PC-3 (cell line): ENCODE measurements at regions of chr7 and their contacts with region 1.

Region 1: GRCh38 chr7:12686894-12687717 is at the start of gene ARL4A:
- DNase-seq: peak; percentile 98
- ATAC-seq: peak; percentile 76
- H3K4me3 ChIP-seq: peak within 1 kb of the TSS; percentile 92
- H3K27ac ChIP-seq: peak within 1 kb of the TSS; percentile 71
- H3K4me1 ChIP-seq: peaks cover 32% of the 10 kb centered on the region
- H3K27me3 ChIP-seq: no peaks in the 10 kb centered on the region
- CTCF ChIP-seq: peak; percentile 61
- total RNA-seq, gene ARL4A: 23.7 and 25.1 TPM in 2 replicates

Region 2: DNA sequence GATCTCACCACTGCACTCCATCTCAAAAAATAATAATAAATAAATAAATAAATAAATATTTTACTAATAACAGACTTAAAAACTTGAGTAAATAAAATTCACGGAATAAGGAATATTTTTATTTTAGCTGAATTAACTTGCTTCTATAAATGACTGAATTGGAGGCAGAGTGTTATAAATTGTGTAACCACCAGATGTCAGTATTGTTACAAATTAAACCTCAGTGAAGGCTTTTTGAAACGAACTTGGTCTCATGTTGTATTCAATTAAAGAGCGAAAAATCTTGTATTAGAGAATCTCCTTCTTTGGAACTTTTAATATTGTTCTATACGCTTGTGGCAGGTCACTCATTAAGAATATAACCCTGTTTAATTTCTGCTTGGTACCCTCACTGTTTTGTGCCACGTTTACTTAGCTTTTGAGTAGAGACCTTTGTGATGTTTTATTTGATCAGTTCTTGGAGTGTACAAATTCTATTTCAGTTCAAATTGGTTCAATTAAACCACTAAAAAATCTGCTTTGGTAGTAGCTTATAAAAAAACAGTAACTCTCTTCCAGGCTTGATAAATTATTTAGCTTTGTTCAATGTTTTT is 162.2 kb before region 1 on chr7:
- CTCF ChIA-PET with region 1: no interaction called
- POLR2A ChIA-PET with region 1: no interaction called
- intact Hi-C with region 1: loop called (anchors 2 kb)
- DNase-seq: peak; percentile 80
- ATAC-seq: peak; percentile 51; the same call in 1 of the 2 replicates
- H3K4me3 ChIP-seq: no peak overlapping the region
- H3K27ac ChIP-seq: no peak overlapping the region
- H3K4me1 ChIP-seq: no peaks in the 10 kb centered on the region
- H3K27me3 ChIP-seq: no peaks in the 10 kb centered on the region
- CTCF ChIP-seq: peak; percentile 64

Region 3: DNA sequence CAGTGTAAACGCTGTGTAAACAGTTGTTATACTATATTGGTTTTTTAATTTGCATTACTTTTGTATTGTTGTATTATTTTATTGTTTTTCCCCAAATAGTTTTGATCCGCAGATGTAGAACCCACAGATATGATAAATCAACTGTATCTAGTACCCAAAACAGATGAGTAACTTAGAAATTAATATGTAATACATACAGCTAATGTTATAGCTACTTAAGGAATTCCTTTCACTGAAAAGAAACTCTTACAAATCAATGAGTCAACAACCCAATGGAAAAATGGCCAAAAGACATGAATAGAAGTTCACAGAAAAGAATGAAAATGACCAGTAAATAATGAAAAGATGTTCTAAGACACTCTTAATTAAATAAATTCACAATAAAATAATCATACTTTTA is 31.9 kb before region 1 on chr7:
- CTCF ChIA-PET with region 1: interaction called, 4 read pairs
- POLR2A ChIA-PET with region 1: interaction called, 16 read pairs
- intact Hi-C with region 1: no loop called
- DNase-seq: peak; percentile 55
- ATAC-seq: peak; percentile 38; the same call in 1 of the 2 replicates
- H3K4me3 ChIP-seq: no peak overlapping the region
- H3K27ac ChIP-seq: no peak overlapping the region
- H3K4me1 ChIP-seq: peaks cover 32% of the 10 kb centered on the region
- H3K27me3 ChIP-seq: no peaks in the 10 kb centered on the region
- CTCF ChIP-seq: no peak

Region 4: GRCh38 chr7:12737373-12737772 is 50.3 kb after region 1 on chr7:
- CTCF ChIA-PET with region 1: no interaction called
- POLR2A ChIA-PET with region 1: no interaction called
- intact Hi-C with region 1: no loop called
- DNase-seq: no peak
- ATAC-seq: no peak
- H3K4me3 ChIP-seq: no peak overlapping the region
- H3K27ac ChIP-seq: no peak overlapping the region
- H3K4me1 ChIP-seq: peaks cover 18% of the 10 kb centered on the region
- H3K27me3 ChIP-seq: no peaks in the 10 kb centered on the region
- CTCF ChIP-seq: no peak

Region 5: DNA sequence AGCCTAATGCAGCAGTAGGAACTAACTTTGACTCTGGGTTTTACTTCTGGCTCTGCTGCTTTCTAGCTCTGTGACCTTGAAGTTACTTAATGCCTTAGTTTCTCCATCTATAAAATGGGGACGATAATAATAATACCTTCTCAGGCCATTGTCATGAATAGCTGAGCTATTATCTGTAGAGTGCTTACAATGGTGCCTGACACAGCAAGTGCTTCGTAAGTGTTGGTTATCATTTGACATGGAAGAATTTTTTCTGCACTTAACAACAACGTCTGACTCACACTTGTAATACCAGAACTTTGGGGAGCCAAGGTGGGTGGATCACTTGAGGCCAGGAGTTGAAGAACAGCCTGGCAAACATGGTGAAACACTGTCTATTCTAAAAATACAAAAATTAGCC is 140.8 kb after region 1 on chr7:
- CTCF ChIA-PET with region 1: interaction called, 3 read pairs
- POLR2A ChIA-PET with region 1: no interaction called
- intact Hi-C with region 1: loop called (anchors 1 kb)
- DNase-seq: peak; percentile 36
- ATAC-seq: no peak
- H3K4me3 ChIP-seq: no peak overlapping the region
- H3K27ac ChIP-seq: peak overlapping the region; percentile 58
- H3K4me1 ChIP-seq: peaks cover 16% of the 10 kb centered on the region
- H3K27me3 ChIP-seq: no peaks in the 10 kb centered on the region
- CTCF ChIP-seq: no peak

Region 6: DNA sequence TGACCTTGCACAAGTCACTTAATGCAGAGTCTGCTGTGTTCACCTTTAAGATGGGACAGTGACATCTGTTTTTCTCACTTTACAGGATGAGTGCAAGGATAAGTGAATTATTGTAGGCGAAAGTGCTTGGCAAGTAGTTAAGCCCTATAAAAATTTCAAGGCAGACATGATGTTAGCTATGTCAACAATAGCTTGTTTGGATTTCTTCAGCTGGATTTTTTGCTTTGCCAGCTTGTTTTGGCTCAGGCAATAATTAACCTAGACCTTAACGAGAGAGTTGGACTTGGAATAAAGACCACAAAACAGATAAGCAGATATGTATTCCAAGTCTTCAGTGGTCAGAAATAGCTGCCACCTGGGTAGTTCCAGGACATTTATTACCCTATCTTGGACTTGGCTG is 255.5 kb after region 1 on chr7:
- CTCF ChIA-PET with region 1: no interaction called
- POLR2A ChIA-PET with region 1: interaction called, 3 read pairs
- intact Hi-C with region 1: loop called (anchors 1 kb)
- DNase-seq: peak; percentile 62
- ATAC-seq: peak; percentile 82
- H3K4me3 ChIP-seq: no peak overlapping the region
- H3K27ac ChIP-seq: no peak overlapping the region
- H3K4me1 ChIP-seq: peaks cover 33% of the 10 kb centered on the region
- H3K27me3 ChIP-seq: no peaks in the 10 kb centered on the region
- CTCF ChIP-seq: no peak

Region 7: DNA sequence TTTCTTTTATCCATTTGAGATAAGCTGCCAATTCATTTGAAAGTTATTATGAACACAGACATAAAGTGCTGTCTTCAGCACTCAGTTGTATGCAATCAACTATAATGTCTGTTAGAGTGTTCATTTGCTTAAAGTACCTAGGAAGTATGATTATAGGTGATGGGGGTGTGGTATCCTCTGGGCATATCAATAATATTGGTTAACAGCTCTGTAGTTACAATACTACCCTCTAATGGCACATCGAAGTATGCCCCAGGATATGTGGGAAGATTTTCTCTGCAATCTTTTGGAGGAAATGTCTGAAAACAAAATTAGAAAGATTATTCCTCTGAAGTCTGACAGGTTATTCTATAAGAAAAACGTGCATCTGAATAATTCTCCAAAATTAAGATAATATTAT is 430.0 kb after region 1 on chr7:
- CTCF ChIA-PET with region 1: interaction called, 9 read pairs
- POLR2A ChIA-PET with region 1: no interaction called
- intact Hi-C with region 1: loop called (anchors 1 kb)
- DNase-seq: peak; percentile 57
- ATAC-seq: peak; percentile 35; the same call in 1 of the 2 replicates
- H3K4me3 ChIP-seq: no peak overlapping the region
- H3K27ac ChIP-seq: no peak overlapping the region
- H3K4me1 ChIP-seq: peaks cover 3% of the 10 kb centered on the region; the same call in 1 of the 2 replicates
- H3K27me3 ChIP-seq: no peaks in the 10 kb centered on the region
- CTCF ChIP-seq: peak; percentile 85

Region 8: GRCh38 chr7:13262929-13263530 is 575.9 kb after region 1 on chr7:
- CTCF ChIA-PET with region 1: no interaction called
- POLR2A ChIA-PET with region 1: interaction called, 3 read pairs
- intact Hi-C with region 1: loop called (anchors 1 kb)
- DNase-seq: peak; percentile 74
- ATAC-seq: peak; percentile 70
- H3K4me3 ChIP-seq: no peak overlapping the region
- H3K27ac ChIP-seq: no peak overlapping the region
- H3K4me1 ChIP-seq: no peaks in the 10 kb centered on the region
- H3K27me3 ChIP-seq: no peaks in the 10 kb centered on the region
- CTCF ChIP-seq: peak; percentile 74